Astrocyte of the cerebellum (primary cell): ENCODE measurements at regions of chr15 and their contacts with region 1.

Region 1: GRCh38 chr15:66483131-66483566 is 14.4 kb downstream of the SNAPC5 start:
- DNase-seq: peak; percentile 85
- H3K4me3 ChIP-seq: no peak overlapping the region
- CTCF ChIP-seq: no peak

Region 2: GRCh38 chr15:66312144-66312543 is 171.0 kb before region 1 on chr15:
- in situ Hi-C with region 1: loop called (anchors 10 kb)
- DNase-seq: no peak
- H3K4me3 ChIP-seq: no peak overlapping the region
- CTCF ChIP-seq: no peak

Region 3: GRCh38 chr15:66630801-66631351 is 147.7 kb after region 1 on chr15:
- in situ Hi-C with region 1: no loop called
- DNase-seq: no peak
- H3K4me3 ChIP-seq: no peak overlapping the region
- CTCF ChIP-seq: no peak